B cell (primary cell): ENCODE measurements at regions of chr3 and their contacts with region 1.

Region 1: DNA sequence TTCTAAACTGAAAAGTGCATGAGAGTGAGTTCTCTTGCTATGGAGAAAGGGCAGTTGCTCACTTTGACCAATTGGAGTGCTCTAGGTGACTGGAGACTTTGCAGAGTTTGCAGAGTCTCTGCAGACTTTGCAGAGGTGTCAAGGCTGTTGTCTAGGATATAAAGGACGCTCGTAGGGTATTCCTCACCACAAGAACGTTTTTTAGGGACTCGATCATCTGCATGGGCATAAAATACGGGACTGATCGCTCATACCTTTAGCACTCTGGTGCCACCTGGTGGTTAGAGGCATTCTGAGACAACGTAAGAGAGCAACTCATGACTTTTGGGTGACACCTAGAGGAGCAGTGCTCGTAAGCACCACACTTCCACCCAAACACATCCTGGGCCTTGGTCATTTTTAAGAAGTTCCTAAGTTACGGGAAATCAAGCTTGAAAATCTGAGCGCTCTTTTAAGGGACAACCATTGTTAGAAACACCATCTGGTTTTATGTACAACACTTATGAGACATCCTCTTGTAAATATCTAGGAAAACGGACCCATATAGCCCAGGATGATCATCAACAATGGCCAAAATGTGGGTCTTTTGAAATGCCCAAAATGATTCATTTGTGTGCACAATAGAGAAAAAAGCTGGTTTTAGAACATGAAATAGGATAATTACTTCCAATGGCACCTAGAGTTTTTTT is 51.6 kb upstream of the XCR1 start:
- DNase-seq: peak; percentile 91
- ATAC-seq: peak; percentile 99
- H3K4me3 ChIP-seq: peak overlapping the region in 2 of 5 experiments; percentile 20 to 25
- H3K4me3 Mint-ChIP-seq: peak overlapping the region; percentile 23
- H3K27ac ChIP-seq: no peak overlapping the region
- H3K27ac Mint-ChIP-seq: no peak overlapping the region
- H3K4me1 ChIP-seq: peaks cover 2 to 7% of the 10 kb centered on the region in 2 donors
- H3K4me1 Mint-ChIP-seq: peaks cover 5% of the 10 kb centered on the region
- H3K27me3 ChIP-seq: no peaks in the 10 kb centered on the region
- H3K27me3 Mint-ChIP-seq: no peaks in the 10 kb centered on the region
- CTCF ChIP-seq: peak; percentile 98

Region 2: GRCh38 chr3:45507820-45508317 is 571.0 kb before region 1 on chr3:
- CTCF ChIA-PET with region 1: interaction called, 7 read pairs
- POLR2A ChIA-PET with region 1: no interaction called
- intact Hi-C with region 1: loop called (anchors 2 kb)
- DNase-seq: no peak
- ATAC-seq: no peak
- H3K4me3 ChIP-seq: no peak overlapping the region
- H3K4me3 Mint-ChIP-seq: no peak overlapping the region
- H3K27ac ChIP-seq: no peak overlapping the region
- H3K27ac Mint-ChIP-seq: no peak overlapping the region
- H3K4me1 ChIP-seq: no peaks in the 10 kb centered on the region
- H3K4me1 Mint-ChIP-seq: no peaks in the 10 kb centered on the region
- H3K27me3 ChIP-seq: no peaks in the 10 kb centered on the region
- H3K27me3 Mint-ChIP-seq: no peaks in the 10 kb centered on the region
- CTCF ChIP-seq: no peak

Region 3: DNA sequence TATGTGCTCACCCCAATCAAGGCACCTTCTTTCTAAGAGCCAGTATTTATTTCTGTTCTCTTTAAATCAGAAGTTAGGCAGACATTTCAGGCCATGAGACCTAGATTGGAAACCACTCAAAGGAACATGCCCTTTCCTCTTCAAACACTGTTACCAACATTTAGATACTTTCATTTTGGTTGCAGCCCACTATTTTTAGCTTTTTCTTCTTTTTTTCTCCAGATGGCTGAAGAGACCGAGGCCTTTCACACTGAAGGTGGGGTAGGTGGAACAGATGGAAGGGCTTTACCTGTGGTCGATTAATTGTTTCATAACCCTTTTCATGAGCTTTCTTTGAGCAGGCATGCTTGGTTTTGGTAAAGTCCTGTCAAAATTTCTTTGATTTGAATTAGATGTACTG is 226.0 kb before region 1 on chr3:
- CTCF ChIA-PET with region 1: no interaction called
- POLR2A ChIA-PET with region 1: no interaction called
- intact Hi-C with region 1: no loop called
- DNase-seq: no peak
- ATAC-seq: no peak
- H3K4me3 ChIP-seq: no peak overlapping the region
- H3K4me3 Mint-ChIP-seq: peak overlapping the region; percentile 56
- H3K27ac ChIP-seq: peak overlapping the region; percentile 48 to 64
- H3K27ac Mint-ChIP-seq: peak overlapping the region; percentile 77
- H3K4me1 ChIP-seq: peaks cover 8 to 14% of the 10 kb centered on the region in 2 donors
- H3K4me1 Mint-ChIP-seq: peaks cover 24% of the 10 kb centered on the region
- H3K27me3 ChIP-seq: no peaks in the 10 kb centered on the region
- H3K27me3 Mint-ChIP-seq: peaks cover 8% of the 10 kb centered on the region
- CTCF ChIP-seq: no peak

Region 4: GRCh38 chr3:45938864-45939263 is 140.0 kb before region 1 on chr3:
- CTCF ChIA-PET with region 1: interaction called, 193 read pairs
- POLR2A ChIA-PET with region 1: interaction called, 3 read pairs
- intact Hi-C with region 1: loop called (anchors 1 kb)
- DNase-seq: peak; percentile 86
- ATAC-seq: peak; percentile 79
- H3K4me3 ChIP-seq: no peak overlapping the region
- H3K4me3 Mint-ChIP-seq: no peak overlapping the region
- H3K27ac ChIP-seq: no peak overlapping the region
- H3K27ac Mint-ChIP-seq: no peak overlapping the region
- H3K4me1 ChIP-seq: peaks cover 0 to 5% of the 10 kb centered on the region in 2 donors
- H3K4me1 Mint-ChIP-seq: no peaks in the 10 kb centered on the region
- H3K27me3 ChIP-seq: no peaks in the 10 kb centered on the region
- H3K27me3 Mint-ChIP-seq: no peaks in the 10 kb centered on the region
- CTCF ChIP-seq: peak; percentile 86

Region 5: DNA sequence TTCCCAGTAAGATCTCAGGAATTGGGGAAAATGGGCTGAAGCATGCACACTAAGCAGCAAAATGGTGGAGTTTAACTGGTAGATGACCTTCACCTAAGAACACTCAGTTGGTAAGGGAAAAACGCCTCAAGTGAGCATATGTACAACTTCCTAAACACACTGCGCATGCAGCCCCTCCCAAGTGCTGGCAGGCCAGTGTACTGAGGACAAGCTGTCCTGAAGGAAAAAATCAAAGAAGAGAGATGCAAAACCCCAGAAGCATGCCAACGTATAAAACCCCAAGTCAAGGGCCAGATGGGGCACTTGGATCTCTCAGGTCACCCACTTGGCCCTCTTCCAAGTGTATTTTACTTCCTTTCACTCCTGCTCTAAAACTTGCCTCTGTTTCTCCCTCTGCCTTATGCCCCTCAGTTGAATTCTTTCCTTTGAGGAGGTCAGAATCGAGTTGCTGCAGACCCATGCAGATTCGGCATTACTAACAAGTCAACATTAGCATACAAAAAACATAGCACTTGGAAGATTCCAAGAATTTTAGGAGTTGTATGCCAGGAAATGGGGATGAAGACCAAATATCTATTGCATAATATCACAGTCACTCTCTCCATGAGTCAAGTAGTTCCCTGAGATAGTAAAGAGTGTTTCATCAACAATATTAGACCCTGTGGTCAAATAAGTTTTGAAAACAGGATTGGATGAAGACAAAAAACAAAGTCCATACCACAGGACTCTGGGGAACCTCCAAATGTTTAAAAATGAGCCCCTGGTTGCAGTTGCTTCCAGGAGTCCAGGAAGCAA is 72.4 kb before region 1 on chr3:
- CTCF ChIA-PET with region 1: no interaction called
- POLR2A ChIA-PET with region 1: no interaction called
- intact Hi-C with region 1: no loop called
- DNase-seq: no peak
- ATAC-seq: no peak
- H3K4me3 ChIP-seq: no peak overlapping the region
- H3K4me3 Mint-ChIP-seq: no peak overlapping the region
- H3K27ac ChIP-seq: no peak overlapping the region
- H3K27ac Mint-ChIP-seq: no peak overlapping the region
- H3K4me1 ChIP-seq: no peaks in the 10 kb centered on the region
- H3K4me1 Mint-ChIP-seq: no peaks in the 10 kb centered on the region
- H3K27me3 ChIP-seq: peaks cover 0 to 3% (median 0%) of the 10 kb centered on the region in 4 experiments
- H3K27me3 Mint-ChIP-seq: no peaks in the 10 kb centered on the region
- CTCF ChIP-seq: no peak

Region 6: DNA sequence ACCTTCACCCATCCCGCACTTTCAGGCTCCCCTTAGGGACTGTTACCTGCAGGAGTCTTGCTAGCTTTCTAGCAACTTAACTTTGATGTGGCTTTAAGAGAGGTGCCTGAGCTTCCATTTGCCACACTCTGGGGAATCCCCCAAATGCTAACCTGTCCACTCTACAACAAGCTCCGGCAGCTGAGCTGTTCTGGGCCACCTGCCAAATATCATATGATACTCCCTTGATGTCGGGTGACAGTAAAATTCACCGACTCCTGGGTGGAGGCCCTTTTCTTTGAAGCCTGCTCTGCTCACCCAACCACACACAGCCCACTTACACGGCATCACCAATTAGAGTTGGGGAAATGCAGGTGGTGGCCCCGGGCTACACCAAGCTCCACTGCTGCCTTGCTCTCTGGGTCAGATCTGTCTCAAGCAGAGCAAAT is 13.5 kb before region 1 on chr3:
- CTCF ChIA-PET with region 1: interaction called, 58 read pairs
- POLR2A ChIA-PET with region 1: no interaction called
- intact Hi-C with region 1: no loop called
- DNase-seq: peak; percentile 45
- ATAC-seq: peak; percentile 24
- H3K4me3 ChIP-seq: no peak overlapping the region
- H3K4me3 Mint-ChIP-seq: no peak overlapping the region
- H3K27ac ChIP-seq: no peak overlapping the region
- H3K27ac Mint-ChIP-seq: no peak overlapping the region
- H3K4me1 ChIP-seq: peaks cover 6 to 7% of the 10 kb centered on the region in 2 donors
- H3K4me1 Mint-ChIP-seq: no peaks in the 10 kb centered on the region
- H3K27me3 ChIP-seq: no peaks in the 10 kb centered on the region
- H3K27me3 Mint-ChIP-seq: peaks cover 2% of the 10 kb centered on the region
- CTCF ChIP-seq: no peak

Region 7: GRCh38 chr3:46186471-46187340 is 107.8 kb after region 1 on chr3:
- CTCF ChIA-PET with region 1: interaction called, 12 read pairs
- POLR2A ChIA-PET with region 1: no interaction called
- intact Hi-C with region 1: no loop called
- DNase-seq: peak; percentile 81
- ATAC-seq: peak; percentile 87
- H3K4me3 ChIP-seq: peak overlapping the region in 1 of 5 experiments; percentile 34
- H3K4me3 Mint-ChIP-seq: peak overlapping the region; percentile 59
- H3K27ac ChIP-seq: peak overlapping the region; percentile 30 to 53
- H3K27ac Mint-ChIP-seq: peak overlapping the region; percentile 62
- H3K4me1 ChIP-seq: peaks cover 39 to 43% of the 10 kb centered on the region in 2 donors
- H3K4me1 Mint-ChIP-seq: peaks cover 58% of the 10 kb centered on the region
- H3K27me3 ChIP-seq: no peaks in the 10 kb centered on the region
- H3K27me3 Mint-ChIP-seq: no peaks in the 10 kb centered on the region
- CTCF ChIP-seq: no peak

Region 8: GRCh38 chr3:46276502-46277099 is 197.7 kb after region 1 on chr3:
- CTCF ChIA-PET with region 1: interaction called, 13 read pairs
- POLR2A ChIA-PET with region 1: no interaction called
- intact Hi-C with region 1: no loop called
- DNase-seq: peak; percentile 79
- ATAC-seq: peak; percentile 93
- H3K4me3 ChIP-seq: no peak overlapping the region
- H3K4me3 Mint-ChIP-seq: no peak overlapping the region
- H3K27ac ChIP-seq: no peak overlapping the region
- H3K27ac Mint-ChIP-seq: no peak overlapping the region
- H3K4me1 ChIP-seq: peaks cover 5 to 7% of the 10 kb centered on the region in 2 donors
- H3K4me1 Mint-ChIP-seq: peaks cover 11% of the 10 kb centered on the region
- H3K27me3 ChIP-seq: no peaks in the 10 kb centered on the region
- H3K27me3 Mint-ChIP-seq: no peaks in the 10 kb centered on the region
- CTCF ChIP-seq: peak; percentile 89

Region 9: GRCh38 chr3:46378426-46378942 is 299.6 kb after region 1 on chr3:
- CTCF ChIA-PET with region 1: interaction called, 233 read pairs
- POLR2A ChIA-PET with region 1: no interaction called
- intact Hi-C with region 1: no loop called
- DNase-seq: peak; percentile 64
- ATAC-seq: peak; percentile 51
- H3K4me3 ChIP-seq: no peak overlapping the region
- H3K4me3 Mint-ChIP-seq: no peak overlapping the region
- H3K27ac ChIP-seq: no peak overlapping the region
- H3K27ac Mint-ChIP-seq: peak overlapping the region; percentile 5
- H3K4me1 ChIP-seq: peaks cover 24 to 30% of the 10 kb centered on the region in 2 donors
- H3K4me1 Mint-ChIP-seq: peaks cover 41% of the 10 kb centered on the region
- H3K27me3 ChIP-seq: peaks cover 0 to 2% (median 0%) of the 10 kb centered on the region in 4 experiments
- H3K27me3 Mint-ChIP-seq: peaks cover 3% of the 10 kb centered on the region
- CTCF ChIP-seq: peak; percentile 72

Region 10: DNA sequence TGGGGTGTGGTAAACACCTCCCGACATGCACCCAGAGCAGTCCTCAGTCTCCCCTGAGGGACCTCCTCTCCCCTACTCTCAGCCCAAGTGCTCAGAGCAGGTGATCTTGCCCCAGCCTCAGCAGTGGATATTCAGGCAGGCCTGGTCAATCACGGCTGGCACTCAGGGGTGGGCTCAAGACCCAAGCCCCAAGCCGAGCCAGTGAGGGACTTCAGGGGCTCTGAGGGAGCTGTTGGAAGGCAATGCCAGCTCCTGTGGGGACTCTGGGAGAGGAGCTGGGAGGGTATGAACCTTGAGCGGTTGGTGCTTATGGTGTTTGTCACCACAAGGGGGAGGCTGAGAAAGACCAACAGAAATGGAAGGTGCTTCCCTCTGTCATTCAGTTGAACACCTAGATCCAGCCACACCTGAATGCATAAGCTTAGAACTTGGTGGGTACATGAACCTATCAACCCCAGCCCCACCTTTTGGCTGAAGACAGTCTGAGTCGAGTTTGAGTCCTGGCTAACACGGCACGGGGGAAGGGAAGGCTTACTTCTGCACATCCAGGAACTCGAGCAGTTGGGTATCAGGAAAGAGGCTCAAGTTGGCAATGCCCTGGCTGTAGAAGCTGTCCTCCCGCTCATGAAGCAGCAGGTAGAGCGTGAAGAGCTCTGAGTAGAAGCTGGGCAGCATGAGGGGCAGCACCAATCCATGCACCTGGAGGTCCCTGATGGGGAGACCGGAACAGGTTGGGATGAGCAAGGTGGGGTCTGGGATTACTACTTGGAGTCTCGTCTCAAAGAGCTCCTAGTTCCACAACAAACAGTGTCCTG is 595.4 kb after region 1 on chr3:
- CTCF ChIA-PET with region 1: no interaction called
- POLR2A ChIA-PET with region 1: no interaction called
- intact Hi-C with region 1: no loop called
- DNase-seq: no peak
- ATAC-seq: no peak
- H3K4me3 ChIP-seq: no peak overlapping the region
- H3K4me3 Mint-ChIP-seq: no peak overlapping the region
- H3K27ac ChIP-seq: no peak overlapping the region
- H3K27ac Mint-ChIP-seq: no peak overlapping the region
- H3K4me1 ChIP-seq: no peaks in the 10 kb centered on the region
- H3K4me1 Mint-ChIP-seq: no peaks in the 10 kb centered on the region
- H3K27me3 ChIP-seq: peaks cover 0 to 3% (median 0%) of the 10 kb centered on the region in 4 experiments
- H3K27me3 Mint-ChIP-seq: peaks cover 8% of the 10 kb centered on the region
- CTCF ChIP-seq: no peak